Heart left ventricle (tissue), 16 donors: ENCODE measurements at regions of chr17 and their contacts with region 1.

Region 1: GRCh38 chr17:20095336-20096080 is 86.3 kb downstream of the SPECC1 start:
- DNase-seq: peak; percentile 79 to 89 (median 80)
- ATAC-seq: peak; percentile 38 to 67 (median 58)
- H3K4me3 ChIP-seq: peak overlapping the region in 6 of 12 donors; percentile 5 to 24 (median 11)
- H3K27ac ChIP-seq: peak overlapping the region; percentile 55 to 100 (median 90)
- H3K4me1 ChIP-seq: peaks cover 4 to 59% (median 42%) of the 10 kb centered on the region in 12 donors
- H3K27me3 ChIP-seq: no peaks in the 10 kb centered on the region
- CTCF ChIP-seq: peak; percentile 14 to 65 (median 44)
- POLR2A ChIP-seq: peak in 1 of 2 donors; percentile 29

Region 2: GRCh38 chr17:19992803-19993713 is 102.5 kb before region 1 on chr17:
- intact Hi-C with region 1: loop called in 1 of 10 experiments (anchors 5 kb)
- DNase-seq: peak; percentile 82 to 94 (median 87)
- ATAC-seq: peak; percentile 95 to 99 (median 99)
- H3K4me3 ChIP-seq: peak overlapping the region in 2 of 12 donors; percentile 8 to 13
- H3K27ac ChIP-seq: no peak overlapping the region
- H3K4me1 ChIP-seq: peaks cover 0 to 11% (median 1%) of the 10 kb centered on the region in 12 donors
- H3K27me3 ChIP-seq: no peaks in the 10 kb centered on the region
- CTCF ChIP-seq: peak; percentile 66 to 82 (median 76)
- POLR2A ChIP-seq: no peak

Region 3: GRCh38 chr17:20063665-20064648 is 31.6 kb before region 1 on chr17:
- intact Hi-C with region 1: loop called in 2 of 10 experiments (anchors 5 kb)
- DNase-seq: peak; percentile 65 to 85 (median 74)
- ATAC-seq: peak; percentile 80 to 89 (median 86)
- H3K4me3 ChIP-seq: peak overlapping the region in 1 of 12 donors; percentile 3
- H3K27ac ChIP-seq: peak overlapping the region; percentile 51 to 79 (median 70)
- H3K4me1 ChIP-seq: peaks cover 0 to 51% (median 17%) of the 10 kb centered on the region in 12 donors
- H3K27me3 ChIP-seq: no peaks in the 10 kb centered on the region
- CTCF ChIP-seq: no peak
- POLR2A ChIP-seq: no peak